ENCODE measurements at regions of chr6 and their contacts with region 1.

Region 1: GRCh38 chr6:42879372-42880239 is at the start of gene RPL7L1:
- DNase-seq: peak; percentile 83 to 85
- H3K4me3 ChIP-seq: peak within 1 kb of the TSS; percentile 78
- H3K4me1 ChIP-seq: peaks cover 10% of the 10 kb centered on the region
- H3K27me3 ChIP-seq: no peaks in the 10 kb centered on the region

Region 2: DNA sequence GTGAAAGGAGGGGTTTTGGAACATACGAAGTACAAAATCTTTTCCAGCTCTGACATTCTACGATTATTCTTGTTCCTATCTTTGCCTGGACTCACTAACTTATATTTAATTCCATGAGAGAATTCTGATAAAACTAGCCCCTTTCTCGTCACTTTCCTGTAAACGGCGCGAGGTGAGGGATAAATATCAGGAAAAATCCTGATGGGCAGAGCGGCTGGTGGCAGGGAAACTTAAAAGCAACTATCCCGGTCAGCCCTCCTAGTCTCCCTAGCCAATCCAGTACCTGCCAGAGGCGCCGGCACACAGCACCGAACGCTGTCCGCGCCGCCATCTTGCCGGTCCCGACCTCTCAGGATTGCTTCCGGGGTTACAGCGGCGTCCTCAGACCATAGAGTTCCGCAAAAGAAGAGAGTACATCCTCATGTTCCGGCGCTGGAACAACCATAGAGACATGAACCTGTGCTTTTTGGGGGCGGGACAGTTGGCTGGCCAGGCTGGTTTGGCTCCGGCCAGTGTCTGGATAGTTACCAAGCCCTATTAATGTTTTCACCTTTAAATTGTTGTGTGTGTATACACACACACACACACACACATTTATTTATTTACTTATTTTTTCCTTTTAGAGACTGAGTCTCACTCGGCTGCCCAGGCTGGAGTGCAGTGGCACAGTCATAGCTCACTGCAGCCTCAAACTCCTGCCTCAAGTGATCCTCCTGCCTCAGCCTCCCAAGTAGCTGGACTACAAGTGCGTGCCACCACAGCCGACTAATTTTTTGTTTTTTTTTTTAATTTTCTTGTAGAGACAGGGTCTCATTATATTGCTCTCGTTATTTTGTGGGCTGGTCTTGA is 661.9 kb before region 1 on chr6 and contains the start of gene MRPS10:
- in situ Hi-C with region 1: loop called (anchors 25 kb)
- DNase-seq: peak; percentile 95 to 96
- H3K4me3 ChIP-seq: peak within 1 kb of the TSS; percentile 75
- H3K4me1 ChIP-seq: peaks cover 5% of the 10 kb centered on the region; the same call in 1 of the 2 replicates
- H3K27me3 ChIP-seq: no peaks in the 10 kb centered on the region

Region 3: DNA sequence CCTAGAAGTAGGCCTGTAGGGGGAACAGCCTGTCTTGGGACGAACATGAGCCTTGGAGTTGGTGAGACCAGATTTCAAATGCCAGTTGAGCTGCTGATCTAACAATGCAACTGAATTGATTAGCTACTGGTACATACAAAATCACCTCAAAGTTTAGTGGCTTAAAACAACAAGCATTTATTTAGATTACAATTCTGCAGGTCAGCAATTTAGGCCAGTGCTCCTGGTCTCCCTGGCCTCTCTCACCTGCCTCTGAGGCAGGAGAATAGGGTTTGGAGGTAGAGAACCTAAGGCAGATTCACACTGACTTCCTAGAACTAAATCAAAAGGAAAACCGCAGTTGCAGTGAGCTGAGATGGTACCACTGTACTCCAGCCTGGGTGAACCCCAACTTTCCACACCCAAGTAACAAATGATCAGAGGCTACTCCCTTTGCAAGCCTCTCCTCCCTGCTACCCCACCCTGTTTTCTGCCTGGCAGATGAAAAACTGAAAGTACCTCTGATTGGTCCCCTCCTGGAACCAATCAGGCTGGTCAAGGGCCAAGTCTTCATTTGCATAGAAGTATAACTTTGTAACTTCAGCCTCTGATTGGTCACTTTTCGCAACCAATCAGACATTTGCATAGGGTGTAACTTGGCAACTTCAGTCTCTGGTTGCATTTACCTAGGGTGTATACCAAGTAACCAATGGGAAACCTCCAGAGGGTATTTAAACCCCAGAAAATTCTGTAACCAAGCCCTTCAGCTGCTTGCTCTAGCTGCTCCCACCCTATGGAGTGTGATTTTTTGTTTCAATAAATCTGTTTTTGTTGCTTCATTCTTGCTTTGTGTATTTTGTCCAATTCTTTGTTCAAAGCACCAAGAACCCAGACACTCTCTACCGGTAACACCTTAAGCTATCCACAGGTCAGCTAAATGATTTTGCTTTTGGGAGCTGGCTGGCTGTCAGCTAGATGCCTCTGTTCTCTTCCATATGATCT is 323.8 kb before region 1 on chr6:
- in situ Hi-C with region 1: no loop called
- DNase-seq: peak; percentile 17 to 69
- H3K4me3 ChIP-seq: no peak overlapping the region
- H3K4me1 ChIP-seq: peaks cover 5% of the 10 kb centered on the region
- H3K27me3 ChIP-seq: no peaks in the 10 kb centered on the region

Region 4: DNA sequence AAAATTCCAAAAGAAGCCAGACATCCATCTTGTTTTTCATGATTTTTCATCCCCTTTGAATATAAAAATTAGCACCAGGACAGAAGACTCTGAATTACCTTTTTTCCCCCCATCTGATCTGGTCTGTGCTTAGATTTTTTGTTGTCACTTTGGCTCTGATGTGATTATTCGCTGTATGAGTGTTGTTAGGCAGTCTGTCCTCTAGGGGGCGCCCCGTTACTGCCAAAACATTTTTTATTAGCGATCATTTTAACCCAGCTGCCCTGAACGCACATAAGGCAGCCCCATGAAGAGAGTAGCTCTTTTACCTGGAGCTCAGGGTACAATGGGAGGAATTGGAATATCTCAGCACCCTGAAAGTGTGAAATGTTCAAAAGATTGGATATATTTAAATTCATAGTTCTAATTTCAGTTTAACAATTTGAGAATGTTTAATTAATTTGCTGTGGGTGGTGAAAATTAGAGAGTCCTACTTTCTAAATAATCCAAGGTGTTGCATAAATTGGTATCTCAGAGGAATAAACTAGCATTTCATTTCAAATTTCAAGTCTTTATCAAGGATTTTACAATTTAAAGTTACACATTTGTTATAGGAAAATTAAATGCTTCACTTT is 218.0 kb before region 1 on chr6:
- in situ Hi-C with region 1: loop called (anchors 5 kb)
- DNase-seq: peak; percentile 70 to 85
- H3K4me3 ChIP-seq: no peak overlapping the region
- H3K4me1 ChIP-seq: peaks cover 2% of the 10 kb centered on the region
- H3K27me3 ChIP-seq: no peaks in the 10 kb centered on the region

Region 5: DNA sequence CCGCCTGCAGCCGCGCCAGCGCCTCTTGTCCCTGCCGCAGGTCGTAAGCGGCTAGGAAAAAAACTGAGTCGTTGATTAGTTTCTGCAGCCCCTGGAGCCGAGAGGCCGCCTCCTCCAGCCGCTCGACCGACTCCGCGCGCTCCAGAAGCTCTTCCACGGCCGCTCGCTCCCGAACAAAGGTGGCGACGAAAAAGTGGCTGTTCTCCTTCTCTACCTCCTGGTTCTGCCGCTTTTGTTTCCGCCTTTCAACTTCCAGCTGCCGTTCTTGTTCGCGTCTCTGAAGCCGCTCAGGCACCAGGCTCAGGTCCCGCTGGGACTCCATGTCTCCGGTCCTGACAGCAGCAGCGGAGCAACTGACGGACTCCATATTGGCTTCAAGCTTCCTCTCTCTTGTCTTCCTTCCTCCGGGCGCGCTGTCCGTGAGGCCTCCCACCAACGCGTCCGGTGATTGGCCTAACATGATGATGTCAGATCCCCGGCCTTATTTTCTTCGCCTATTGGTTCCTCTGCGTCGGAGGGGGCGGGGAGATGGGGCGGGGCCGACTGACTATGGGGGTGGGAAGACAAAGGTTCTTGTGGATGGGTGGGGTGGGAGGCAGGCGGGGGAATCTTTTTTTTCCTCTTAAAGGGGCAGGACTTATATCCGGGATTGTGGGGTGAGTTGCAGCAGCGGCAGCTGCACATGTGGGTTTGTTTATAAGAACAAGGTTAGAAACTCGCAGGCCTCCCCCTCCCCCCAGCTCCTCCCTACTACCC is 133.7 kb before region 1 on chr6 and contains the start of gene TBCC:
- in situ Hi-C with region 1: loop called (anchors 25 kb)
- DNase-seq: peak; percentile 96 to 100
- H3K4me3 ChIP-seq: peak within 1 kb of the TSS; percentile 96
- H3K4me1 ChIP-seq: peaks cover 18% of the 10 kb centered on the region
- H3K27me3 ChIP-seq: no peaks in the 10 kb centered on the region

Region 6: DNA sequence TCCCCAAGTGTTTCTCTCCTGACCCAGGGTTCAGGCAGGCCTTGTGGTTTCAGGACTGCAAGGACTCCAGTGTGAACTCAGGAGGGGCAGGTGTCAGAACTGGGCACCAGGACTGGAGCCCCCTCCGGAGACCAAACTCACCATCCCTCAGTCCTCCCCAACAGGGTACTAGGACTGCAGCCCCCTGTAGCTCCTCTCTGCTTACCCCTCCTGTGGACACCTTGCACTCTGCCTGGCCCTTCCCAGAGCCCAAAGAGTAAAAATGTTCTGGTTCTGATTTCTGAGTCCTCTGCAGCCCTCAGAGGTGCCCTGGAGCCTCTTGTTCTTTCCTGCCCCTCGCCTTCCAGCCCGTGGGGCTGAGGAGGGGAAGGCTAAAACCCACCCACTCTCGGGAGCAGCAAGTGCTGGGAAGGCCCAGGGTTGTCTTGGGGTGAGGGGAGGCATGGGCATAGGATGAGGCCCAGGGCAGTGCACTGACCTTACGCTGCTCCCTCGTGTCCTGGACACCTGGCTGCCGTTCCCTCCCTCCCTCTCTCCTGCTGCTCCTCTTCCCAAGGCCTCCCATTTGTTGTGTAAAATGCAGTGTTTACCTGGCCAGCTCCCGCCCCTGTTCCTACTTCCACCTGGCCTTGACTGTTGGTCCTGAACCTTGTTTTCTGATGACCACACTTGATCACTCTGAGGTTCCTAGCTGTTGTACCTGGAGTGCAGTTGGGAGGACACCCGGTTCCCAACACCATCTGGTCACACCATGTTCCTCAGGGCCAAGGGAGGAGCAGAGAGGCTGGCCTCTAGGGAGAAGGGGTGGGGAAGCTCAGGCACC is 59.6 kb after region 1 on chr6:
- in situ Hi-C with region 1: no loop called
- DNase-seq: no peak
- H3K4me3 ChIP-seq: no peak overlapping the region
- H3K4me1 ChIP-seq: no peaks in the 10 kb centered on the region
- H3K27me3 ChIP-seq: no peaks in the 10 kb centered on the region

Measured in HAP-1 (cell line).